ENCODE measurements at regions of chr16 and their contacts with region 1.

Region 1: DNA sequence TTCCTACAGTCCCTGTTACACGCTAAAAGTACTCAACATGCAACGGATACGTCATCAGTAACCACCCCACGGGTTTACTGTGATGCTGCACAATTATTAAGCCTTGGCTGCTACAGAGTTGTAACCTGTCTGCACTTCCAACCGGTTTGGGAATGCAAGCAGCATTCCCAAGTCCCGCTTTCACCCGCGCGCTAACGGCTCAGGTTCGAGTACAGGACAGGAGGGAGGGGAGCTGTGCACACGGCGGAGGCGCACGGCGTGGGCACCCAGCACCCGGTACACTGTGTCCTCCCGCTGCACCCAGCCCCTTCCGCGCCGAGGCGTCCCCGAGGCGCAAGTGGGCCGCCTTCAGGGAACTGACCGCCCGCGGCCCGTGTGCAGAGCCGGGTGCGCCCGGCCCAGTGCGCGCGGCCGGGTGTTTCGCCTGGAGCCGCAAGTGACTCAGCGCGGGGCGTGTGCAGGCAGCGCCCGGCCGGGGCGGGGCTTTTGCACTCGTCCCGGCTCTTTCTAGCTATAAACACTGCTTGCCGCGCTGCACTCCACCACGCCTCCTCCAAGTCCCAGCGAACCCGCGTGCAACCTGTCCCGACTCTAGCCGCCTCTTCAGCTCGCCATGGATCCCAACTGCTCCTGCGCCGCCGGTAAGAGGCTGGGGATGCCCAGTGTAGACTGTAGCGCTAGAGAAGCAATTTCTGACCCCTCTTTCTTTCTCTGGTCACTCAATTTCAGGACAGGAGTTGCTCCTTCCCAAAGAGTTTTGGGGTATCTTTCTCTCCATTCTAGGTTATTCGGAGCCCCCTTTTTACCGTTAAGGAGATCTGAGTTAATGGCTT is at the start of gene MT2A:
- DNase-seq: peak in 1 of 2 donors; percentile 97
- H3K4me3 ChIP-seq: peak within 1 kb of the TSS; percentile 63 to 67
- H3K27ac ChIP-seq: peak within 1 kb of the TSS; percentile 83
- H3K4me1 ChIP-seq: peaks cover 51% of the 10 kb centered on the region
- H3K27me3 ChIP-seq: no peaks in the 10 kb centered on the region
- CTCF ChIP-seq: no peak
- POLR2A ChIP-seq: peak in 1 of 2 donors; percentile 91
- total RNA-seq, gene MT2A: 661 TPM

Region 2: GRCh38 chr16:56625140-56625942 is 17.1 kb after region 1 on chr16 and contains the start of gene MT1E:
- intact Hi-C with region 1: loop called (anchors 2 kb)
- DNase-seq: no peak
- H3K4me3 ChIP-seq: peak within 1 kb of the TSS; percentile 49 to 59
- H3K27ac ChIP-seq: peak within 1 kb of the TSS; percentile 81
- H3K4me1 ChIP-seq: peaks cover 17% of the 10 kb centered on the region
- H3K27me3 ChIP-seq: no peaks in the 10 kb centered on the region
- CTCF ChIP-seq: no peak
- POLR2A ChIP-seq: peak in 1 of 2 donors; percentile 81
- total RNA-seq, gene MT1E: 564 TPM

Region 3: GRCh38 chr16:56632156-56632847 is 24.0 kb after region 1 on chr16 and contains the start of gene MT1M:
- intact Hi-C with region 1: loop called (anchors 2 kb)
- DNase-seq: no peak
- H3K4me3 ChIP-seq: peak within 1 kb of the TSS; percentile 52 to 53
- H3K27ac ChIP-seq: peak within 1 kb of the TSS; percentile 71
- H3K4me1 ChIP-seq: peaks cover 22% of the 10 kb centered on the region
- H3K27me3 ChIP-seq: no peaks in the 10 kb centered on the region
- CTCF ChIP-seq: no peak
- POLR2A ChIP-seq: peak in 1 of 2 donors; percentile 13
- total RNA-seq, gene MT1M: 63.3 TPM

Region 4: DNA sequence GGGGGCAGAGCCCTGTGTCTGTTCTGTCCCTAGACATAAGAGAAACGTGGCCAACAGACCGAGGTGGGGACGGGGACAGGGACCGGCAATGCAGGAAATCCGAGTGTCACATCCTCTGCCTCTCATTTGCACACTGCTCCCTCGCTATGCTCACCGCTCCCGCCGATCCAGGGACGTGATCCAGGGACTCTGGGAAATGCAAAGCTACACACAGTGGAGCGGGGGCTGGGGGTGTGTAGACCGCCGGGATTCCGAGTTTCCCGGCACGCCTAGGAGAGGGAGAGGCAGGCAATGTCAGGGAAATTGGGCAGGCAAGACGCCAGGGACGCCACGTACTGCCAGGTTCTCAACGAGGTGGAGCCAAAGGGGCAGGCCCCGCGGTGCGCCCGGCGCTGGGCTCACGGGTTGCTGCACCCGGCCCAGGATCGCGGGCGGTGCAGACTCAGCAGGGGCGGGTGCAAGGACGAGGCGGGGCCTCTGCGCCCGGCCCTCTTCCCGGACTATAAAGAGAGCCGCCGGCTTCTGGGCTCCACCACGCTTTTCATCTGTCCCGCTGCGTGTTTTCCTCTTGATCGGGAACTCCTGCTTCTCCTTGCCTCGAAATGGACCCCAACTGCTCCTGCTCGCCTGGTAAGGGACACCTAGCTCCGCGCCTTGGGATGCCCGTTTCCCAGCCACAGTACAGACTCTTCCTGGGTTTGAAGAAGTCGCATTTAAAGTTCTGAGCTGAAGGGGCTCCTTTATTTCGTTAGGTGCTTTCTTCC is 73.9 kb after region 1 on chr16 and contains the start of gene MT1X:
- intact Hi-C with region 1: loop called (anchors 2 kb)
- DNase-seq: peak in 1 of 2 donors; percentile 98
- H3K4me3 ChIP-seq: peak within 1 kb of the TSS; percentile 59 to 75
- H3K27ac ChIP-seq: peak within 1 kb of the TSS; percentile 80
- H3K4me1 ChIP-seq: peaks cover 24% of the 10 kb centered on the region
- H3K27me3 ChIP-seq: no peaks in the 10 kb centered on the region
- CTCF ChIP-seq: no peak
- POLR2A ChIP-seq: peak in 1 of 2 donors; percentile 96
- total RNA-seq, gene MT1X: 3,049 TPM